ENCODE measurements at regions of chr14 and their contacts with region 1.

Region 1: GRCh38 chr14:77161011-77161410 is 19.4 kb upstream of the ZDHHC22 start:
- DNase-seq: no peak
- H3K4me3 ChIP-seq: no peak overlapping the region
- H3K27ac ChIP-seq: no peak overlapping the region
- H3K4me1 ChIP-seq: peaks cover 0 to 14% (median 10%) of the 10 kb centered on the region in 3 donors
- H3K27me3 ChIP-seq: peaks cover 0 to 39% (median 0%) of the 10 kb centered on the region in 4 donors
- CTCF ChIP-seq: no peak
- POLR2A ChIP-seq: no peak

Region 2: DNA sequence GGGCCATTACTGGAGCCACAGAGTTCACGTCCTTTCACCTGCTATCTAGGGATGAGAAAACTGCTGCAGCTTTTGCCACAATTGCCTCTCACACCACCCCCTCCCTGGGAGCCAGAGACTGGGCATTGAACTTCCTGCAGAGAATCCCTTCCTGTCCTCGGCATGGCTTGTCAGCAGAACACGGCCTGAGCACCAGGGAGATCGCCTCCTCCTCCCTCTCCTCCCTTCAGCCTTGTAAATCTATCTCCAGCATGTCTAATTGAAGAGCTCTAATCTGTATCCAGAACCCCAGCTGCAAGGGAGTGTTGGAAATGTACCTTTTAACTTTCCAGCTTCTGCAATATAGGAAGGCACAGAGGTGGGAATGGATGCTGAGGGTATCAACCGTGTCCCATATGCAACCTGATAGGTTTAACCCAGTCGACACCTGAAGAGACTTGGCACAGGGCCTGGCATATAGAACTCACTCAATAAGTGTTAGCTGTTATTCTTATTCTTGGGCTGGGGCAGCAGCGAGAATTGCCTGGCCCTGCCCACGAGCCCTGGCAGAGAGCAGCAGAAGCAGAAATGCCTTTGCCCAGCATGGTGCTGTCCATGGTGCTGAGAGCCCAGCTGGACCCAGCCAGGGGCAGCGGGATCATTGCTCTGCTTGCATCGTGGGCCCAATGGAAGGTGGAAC is 47.4 kb after region 1 on chr14:
- intact Hi-C with region 1: loop called (anchors 5 kb)
- DNase-seq: no peak
- H3K4me3 ChIP-seq: no peak overlapping the region
- H3K27ac ChIP-seq: no peak overlapping the region
- H3K4me1 ChIP-seq: no peaks in the 10 kb centered on the region
- H3K27me3 ChIP-seq: peaks cover 0 to 15% (median 0%) of the 10 kb centered on the region in 4 donors
- CTCF ChIP-seq: no peak
- POLR2A ChIP-seq: no peak

Measured in esophagus squamous epithelium (tissue), 5 donors.